ENCODE measurements at regions of chr11 and their contacts with region 1.

Region 1: DNA sequence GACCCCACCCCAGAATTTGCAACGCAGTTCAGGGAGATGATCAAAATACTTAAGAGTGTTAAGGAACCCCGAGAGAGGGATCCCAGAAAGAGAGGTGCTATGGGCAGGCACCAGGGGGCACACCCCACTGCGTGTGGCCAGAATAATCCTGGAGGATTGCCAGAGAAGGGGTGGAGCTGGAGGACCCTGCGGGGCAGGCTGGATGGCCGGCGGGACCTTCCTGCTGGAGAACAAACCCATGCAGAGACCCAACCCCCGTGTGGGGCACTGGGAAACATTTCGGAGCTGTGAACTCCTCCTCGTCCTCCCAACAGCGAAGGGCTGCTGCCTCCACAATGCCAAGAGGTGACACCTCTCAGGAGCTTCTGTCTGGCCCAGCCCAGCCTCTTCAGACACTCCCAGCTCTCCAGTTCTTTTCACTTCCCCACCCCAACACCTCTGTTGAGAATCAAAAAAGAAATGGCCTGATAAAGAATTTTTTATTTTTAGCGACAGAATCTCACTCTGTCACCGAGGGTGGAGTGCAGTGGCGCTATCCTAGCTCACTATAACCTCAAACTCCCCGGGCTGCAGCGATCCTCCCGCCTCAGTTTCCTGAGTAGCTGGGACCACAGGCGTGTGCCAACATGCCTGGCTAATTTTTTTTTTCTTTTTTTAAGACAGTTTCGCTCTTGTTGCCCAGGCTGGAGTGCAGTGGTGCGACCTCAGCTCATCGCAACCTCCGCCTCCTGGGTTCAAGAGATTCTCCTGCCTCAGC is 25.6 kb downstream of the RHOD start:
- DNase-seq: no peak
- CTCF ChIP-seq: no peak

Region 2: GRCh38 chr11:67071420-67072284 is 10.6 kb before region 1 on chr11:
- CTCF ChIA-PET with region 1: interaction called, 17 read pairs
- POLR2A ChIA-PET with region 1: no interaction called
- DNase-seq: peak; percentile 92
- CTCF ChIP-seq: peak; percentile 77

Region 3: GRCh38 chr11:67099831-67100324 is 17.7 kb after region 1 on chr11:
- CTCF ChIA-PET with region 1: interaction called, 17 read pairs
- POLR2A ChIA-PET with region 1: no interaction called
- DNase-seq: peak; percentile 65
- CTCF ChIP-seq: no peak

Region 4: DNA sequence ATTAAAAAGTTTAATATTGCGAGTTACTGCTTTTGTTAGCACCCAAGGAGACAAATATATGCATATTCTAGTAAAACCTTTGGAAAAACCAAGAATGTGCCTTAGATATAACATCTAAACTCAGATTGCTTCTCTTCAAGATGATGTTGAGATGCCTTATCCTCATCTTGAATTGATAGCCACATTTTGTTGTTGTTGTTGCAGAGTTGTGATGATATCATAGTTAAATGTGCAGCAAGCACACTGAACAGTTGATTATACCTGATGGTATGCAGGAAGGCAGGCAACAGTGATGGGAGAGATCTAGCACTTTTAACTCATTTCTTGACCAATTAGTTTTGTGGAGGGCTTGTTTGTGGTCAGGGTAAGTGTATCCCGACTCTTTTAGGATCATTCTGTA is 84.9 kb after region 1 on chr11:
- CTCF ChIA-PET with region 1: interaction called, 13 read pairs
- POLR2A ChIA-PET with region 1: no interaction called
- DNase-seq: no peak
- CTCF ChIP-seq: no peak